Astrocyte of the cerebellum (primary cell): ENCODE measurements at regions of chr20 and their contacts with region 1.

Region 1: DNA sequence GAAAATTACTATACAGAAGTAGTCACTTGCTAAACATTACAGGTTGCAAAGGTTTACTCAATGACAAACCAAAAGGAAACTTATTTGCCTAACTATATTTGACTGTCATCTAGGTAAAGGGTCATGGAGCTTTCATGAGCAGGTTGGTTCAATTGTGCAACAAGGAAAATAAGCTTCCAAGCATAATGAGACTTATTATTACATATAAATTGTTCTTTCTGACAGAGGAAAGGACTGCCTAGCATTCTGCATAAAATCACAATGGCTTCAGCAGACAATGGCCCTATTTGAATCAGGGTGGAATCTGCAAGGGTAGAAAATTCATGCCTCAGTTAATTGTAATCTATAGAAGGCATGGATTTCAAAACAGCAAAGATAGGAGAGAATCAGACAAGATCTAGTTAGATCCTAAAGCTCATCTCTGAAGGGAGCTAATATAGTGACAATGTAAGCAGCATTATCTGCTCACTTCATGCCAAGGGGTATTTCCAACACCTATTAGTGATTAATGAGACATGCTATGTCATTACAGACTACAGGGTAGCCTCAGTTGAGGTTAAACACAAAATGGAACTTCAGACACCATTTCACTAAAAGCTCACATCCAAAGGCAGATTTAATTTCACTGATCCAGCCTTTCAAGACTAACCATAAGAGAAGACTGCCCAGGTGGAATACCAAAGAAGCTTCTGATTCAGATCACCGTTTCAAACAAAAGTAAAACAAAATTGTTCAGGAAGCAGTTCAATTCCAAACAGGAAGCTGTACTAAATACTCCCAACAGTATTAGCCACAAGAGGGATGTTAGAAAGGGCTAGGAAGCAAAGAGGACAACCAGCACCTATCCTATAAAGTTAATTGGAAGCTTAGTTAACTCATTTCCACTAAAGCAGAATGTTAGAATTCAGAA is 8.5 kb downstream of the STAU1 start:
- DNase-seq: no peak
- H3K4me3 ChIP-seq: no peak overlapping the region
- CTCF ChIP-seq: no peak

Region 2: DNA sequence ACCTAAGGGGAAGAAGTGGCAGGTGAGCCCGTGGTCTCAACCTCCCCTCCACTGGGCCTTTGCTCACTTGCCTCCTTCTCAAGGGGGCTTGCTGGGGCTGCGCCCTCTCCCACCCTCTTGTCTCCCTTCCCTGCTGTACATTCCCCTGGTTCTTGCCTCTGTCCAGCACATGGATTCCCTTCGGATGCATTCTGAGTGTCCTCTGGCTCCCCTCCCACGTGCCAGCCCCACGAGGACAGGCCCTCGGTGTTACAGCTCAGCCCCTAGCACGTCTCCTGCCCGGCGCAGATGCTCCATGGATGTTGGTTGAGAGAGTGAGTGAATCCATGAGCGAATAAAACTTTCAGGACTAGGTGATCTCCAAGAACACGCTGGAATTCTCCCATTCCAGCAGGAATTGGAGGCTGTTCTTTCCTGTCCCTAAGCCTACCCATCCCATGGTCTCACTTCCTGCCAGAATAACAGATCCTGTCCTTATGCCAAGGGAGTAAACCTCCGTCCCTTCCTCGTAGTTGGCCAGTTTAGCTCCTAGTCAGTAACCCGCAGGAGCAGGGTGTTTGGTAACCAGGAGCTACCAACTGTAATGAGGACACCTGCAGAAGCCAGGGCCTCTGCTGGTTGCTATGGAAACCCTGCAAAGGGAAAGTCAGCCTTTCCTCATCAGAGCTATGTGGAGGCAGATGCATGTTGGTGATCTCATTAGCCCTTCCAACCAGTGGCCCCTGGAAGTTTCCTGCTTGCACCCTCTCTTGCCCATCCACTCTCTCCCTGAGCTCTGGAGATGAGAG is 1026.3 kb before region 1 on chr20:
- in situ Hi-C with region 1: no loop called
- DNase-seq: no peak
- H3K4me3 ChIP-seq: no peak overlapping the region
- CTCF ChIP-seq: no peak

Region 3: GRCh38 chr20:49237531-49237930 is 57.9 kb after region 1 on chr20:
- in situ Hi-C with region 1: no loop called
- DNase-seq: no peak
- H3K4me3 ChIP-seq: no peak overlapping the region
- CTCF ChIP-seq: no peak

Region 4: GRCh38 chr20:49252556-49253350 is 73.1 kb after region 1 on chr20:
- in situ Hi-C with region 1: loop called (anchors 5 kb)
- DNase-seq: no peak
- H3K4me3 ChIP-seq: no peak overlapping the region
- CTCF ChIP-seq: no peak

Region 5: GRCh38 chr20:49508435-49509199 is 329.0 kb after region 1 on chr20:
- in situ Hi-C with region 1: no loop called
- DNase-seq: peak; percentile 43
- H3K4me3 ChIP-seq: no peak overlapping the region
- CTCF ChIP-seq: peak; percentile 53

Region 6: DNA sequence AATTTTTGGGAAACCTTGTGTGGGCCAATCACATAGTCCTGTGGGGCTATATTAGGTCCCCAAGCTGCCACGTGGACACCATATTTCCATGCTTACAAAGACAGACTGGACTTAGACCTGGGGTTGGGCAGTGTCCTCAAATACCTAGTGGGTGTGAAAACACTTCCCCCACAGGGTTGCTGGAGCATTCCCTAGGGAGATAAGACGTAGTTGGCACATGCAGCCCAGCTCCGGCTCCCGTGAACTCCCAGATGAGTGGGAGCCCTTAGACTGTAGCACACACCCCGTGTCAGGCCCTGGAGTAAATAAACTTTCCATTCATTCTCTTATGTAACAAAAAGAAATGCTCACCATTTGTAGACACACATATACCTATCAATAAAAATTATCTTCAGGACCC is 1829.1 kb after region 1 on chr20:
- in situ Hi-C with region 1: no loop called
- DNase-seq: no peak
- H3K4me3 ChIP-seq: no peak overlapping the region
- CTCF ChIP-seq: no peak